ENCODE measurements at regions of chr12 and their contacts with region 1.

Region 1: GRCh38 chr12:7042842-7043241 is 17.7 kb upstream of the C1S start:
- DNase-seq: peak; percentile 52
- H3K4me3 ChIP-seq: no peak overlapping the region
- H3K27ac ChIP-seq: no peak overlapping the region
- H3K4me1 ChIP-seq: peaks cover 13% of the 10 kb centered on the region
- H3K27me3 ChIP-seq: no peaks in the 10 kb centered on the region
- CTCF ChIP-seq: peak; percentile 40 to 56

Region 2: GRCh38 chr12:6919588-6919987 is 123.3 kb before region 1 on chr12:
- CTCF ChIA-PET with region 1: interaction called, 11 read pairs
- dilution Hi-C with region 1: no loop called
- in situ Hi-C with region 1: no loop called
- intact Hi-C with region 1: loop called (anchors 1 kb)
- DNase-seq: peak; percentile 85
- H3K4me3 ChIP-seq: no peak overlapping the region
- H3K27ac ChIP-seq: peak overlapping the region; percentile 1
- H3K4me1 ChIP-seq: peaks cover 31% of the 10 kb centered on the region
- H3K27me3 ChIP-seq: no peaks in the 10 kb centered on the region
- CTCF ChIP-seq: peak; percentile 22 to 28

Measured in mammary epithelial cell (primary cell).